ENCODE measurements at regions of chr11 and their contacts with region 1.

Region 1: GRCh38 chr11:119101759-119102423 is at the start of gene DPAGT1:
- DNase-seq: peak; percentile 68 to 90 (median 86)
- ATAC-seq: peak; percentile 90
- H3K4me3 ChIP-seq: peak within 1 kb of the TSS; percentile 79
- H3K4me3 Mint-ChIP-seq: peak within 1 kb of the TSS; percentile 91 to 100 (median 96)
- H3K27ac ChIP-seq: peak within 1 kb of the TSS; percentile 95
- H3K27ac Mint-ChIP-seq: peak within 1 kb of the TSS; percentile 98 to 100 (median 99)
- H3K4me1 ChIP-seq: peaks cover 21 to 26% of the 10 kb centered on the region in 2 donors
- H3K4me1 Mint-ChIP-seq: peaks cover 24 to 64% (median 50%) of the 10 kb centered on the region in 7 donors
- H3K27me3 ChIP-seq: no peaks in the 10 kb centered on the region
- H3K27me3 Mint-ChIP-seq: no peaks in the 10 kb centered on the region
- total RNA-seq, gene DPAGT1: 21.9 to 63.9 (median 37.9) TPM

Region 2: DNA sequence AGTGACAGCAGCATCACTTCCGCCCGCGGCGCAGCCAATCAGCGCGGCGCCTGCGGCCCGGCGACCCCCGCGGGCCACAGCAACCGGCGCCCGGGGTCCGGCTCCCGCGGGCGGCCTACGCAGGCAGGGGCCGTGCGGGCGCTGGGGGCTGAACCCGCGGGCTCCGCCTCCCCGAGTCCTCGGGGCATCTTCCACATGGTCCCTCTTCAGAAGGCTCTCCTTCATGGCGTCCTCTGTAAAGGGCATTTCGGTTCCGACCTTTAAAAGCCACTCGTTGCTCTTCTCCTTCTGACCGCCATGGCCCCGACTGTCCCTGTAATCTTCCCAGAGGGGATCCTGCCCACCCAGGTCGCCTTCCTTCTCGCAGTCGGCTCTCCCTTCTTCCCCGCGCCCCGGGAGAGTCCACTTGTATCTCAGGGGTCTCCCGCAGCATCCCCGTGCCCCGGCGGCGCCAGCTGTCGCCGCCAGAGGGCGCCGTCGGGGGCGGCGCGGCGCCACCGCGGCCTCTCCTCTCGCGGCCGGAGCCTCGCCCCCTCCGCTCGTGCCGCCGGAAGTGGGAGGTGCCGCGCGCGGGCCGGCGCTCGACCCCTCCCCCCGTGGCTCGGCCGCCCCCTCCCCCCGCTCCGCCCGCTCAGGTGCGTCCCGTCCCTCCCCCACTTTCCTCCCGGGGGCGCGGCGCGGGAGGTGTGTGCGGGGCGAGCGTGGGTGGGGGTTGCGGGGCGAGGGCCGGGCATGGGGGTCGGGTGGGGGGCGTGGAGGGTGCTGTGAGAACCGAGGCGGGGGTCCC is 1869.6 kb before region 1 on chr11 and contains the start of gene RNF214:
- CTCF ChIA-PET with region 1: no interaction called
- POLR2A ChIA-PET with region 1: no interaction called
- intact Hi-C with region 1: loop called in 1 of 2 experiments (anchors 5 kb)
- DNase-seq: peak; percentile 61 to 84 (median 73)
- ATAC-seq: peak; percentile 92
- H3K4me3 ChIP-seq: peak within 1 kb of the TSS; percentile 96
- H3K4me3 Mint-ChIP-seq: peak within 1 kb of the TSS; percentile 91 to 100 (median 98)
- H3K27ac ChIP-seq: peak within 1 kb of the TSS; percentile 97
- H3K27ac Mint-ChIP-seq: peak within 1 kb of the TSS; percentile 94 to 100 (median 99)
- H3K4me1 ChIP-seq: peaks cover 32 to 35% of the 10 kb centered on the region in 2 donors
- H3K4me1 Mint-ChIP-seq: peaks cover 40 to 55% (median 50%) of the 10 kb centered on the region in 7 donors
- H3K27me3 ChIP-seq: no peaks in the 10 kb centered on the region
- H3K27me3 Mint-ChIP-seq: no peaks in the 10 kb centered on the region
- total RNA-seq, gene RNF214: 16.6 to 36.0 (median 24.0) TPM

Region 3: GRCh38 chr11:119030329-119031049 is 71.4 kb before region 1 on chr11 and contains the start of gene SLC37A4:
- CTCF ChIA-PET with region 1: no interaction called
- POLR2A ChIA-PET with region 1: interaction called, 3 read pairs
- intact Hi-C with region 1: loop called (anchors 1 to 2 kb)
- DNase-seq: peak; percentile 96 to 100 (median 98)
- ATAC-seq: peak; percentile 97
- H3K4me3 ChIP-seq: peak within 1 kb of the TSS; percentile 91
- H3K4me3 Mint-ChIP-seq: peak within 1 kb of the TSS; percentile 62 to 93 (median 82)
- H3K27ac ChIP-seq: peak within 1 kb of the TSS; percentile 79
- H3K27ac Mint-ChIP-seq: peak within 1 kb of the TSS; percentile 59 to 93 (median 81)
- H3K4me1 ChIP-seq: peaks cover 0 to 10% of the 10 kb centered on the region in 2 donors
- H3K4me1 Mint-ChIP-seq: peaks cover 12 to 24% (median 17%) of the 10 kb centered on the region in 7 donors
- H3K27me3 ChIP-seq: no peaks in the 10 kb centered on the region
- H3K27me3 Mint-ChIP-seq: no peaks in the 10 kb centered on the region
- total RNA-seq, gene SLC37A4: 7.1 to 20.8 (median 14.6) TPM

Region 4: DNA sequence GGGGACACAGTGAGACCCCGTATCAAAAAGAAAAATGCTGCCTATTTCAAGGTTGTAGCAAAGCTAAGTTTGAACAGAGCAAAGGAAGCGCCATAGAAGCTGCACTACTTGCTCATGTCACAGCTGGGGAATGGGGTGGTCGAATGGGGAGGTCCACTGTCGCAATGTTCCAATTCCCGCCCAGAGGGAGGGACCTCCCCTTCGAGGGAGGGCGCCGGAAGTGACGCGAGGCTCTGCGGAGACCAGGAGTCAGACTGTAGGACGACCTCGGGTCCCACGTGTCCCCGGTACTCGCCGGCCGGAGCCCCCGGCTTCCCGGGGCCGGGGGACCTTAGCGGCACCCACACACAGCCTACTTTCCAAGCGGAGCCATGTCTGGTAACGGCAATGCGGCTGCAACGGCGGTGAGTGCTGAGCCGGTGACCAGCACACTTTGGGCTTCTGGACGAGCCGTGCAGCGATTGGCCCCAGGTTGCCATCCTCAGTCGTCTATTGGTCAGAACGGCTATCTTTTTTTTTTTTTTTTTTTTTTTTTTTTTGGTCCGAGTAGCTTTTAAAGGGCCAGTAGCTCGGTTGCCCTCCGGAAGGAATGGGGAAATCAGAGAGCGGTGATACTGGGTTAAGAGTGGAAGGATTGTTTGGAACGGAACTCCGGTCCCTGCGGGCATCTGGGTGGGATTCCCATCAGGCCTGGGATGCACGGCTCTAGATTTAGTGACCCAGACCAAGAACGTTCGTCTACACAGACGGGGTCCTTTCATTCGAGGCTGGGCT is 17.0 kb before region 1 on chr11 and contains the start of gene HMBS:
- CTCF ChIA-PET with region 1: interaction called, 5 read pairs
- POLR2A ChIA-PET with region 1: interaction called, 14 read pairs
- intact Hi-C with region 1: loop called (anchors 1 to 2 kb)
- DNase-seq: peak; percentile 83 to 93 (median 87)
- ATAC-seq: peak; percentile 97
- H3K4me3 ChIP-seq: peak within 1 kb of the TSS; percentile 81
- H3K4me3 Mint-ChIP-seq: peak within 1 kb of the TSS; percentile 85 to 98 (median 94)
- H3K27ac ChIP-seq: peak within 1 kb of the TSS; percentile 81
- H3K27ac Mint-ChIP-seq: peak within 1 kb of the TSS; percentile 87 to 97 (median 93)
- H3K4me1 ChIP-seq: peaks cover 8 to 9% of the 10 kb centered on the region in 2 donors
- H3K4me1 Mint-ChIP-seq: peaks cover 7 to 39% (median 17%) of the 10 kb centered on the region in 7 donors
- H3K27me3 ChIP-seq: no peaks in the 10 kb centered on the region
- H3K27me3 Mint-ChIP-seq: no peaks in the 10 kb centered on the region
- total RNA-seq, gene HMBS: 6.7 to 25.4 (median 7.7) TPM

Region 5: GRCh38 chr11:119144825-119145486 is 43.1 kb after region 1 on chr11:
- CTCF ChIA-PET with region 1: no interaction called
- POLR2A ChIA-PET with region 1: interaction called, 3 read pairs
- intact Hi-C with region 1: loop called in 1 of 2 experiments (anchors 1 kb)
- DNase-seq: no peak
- ATAC-seq: peak; percentile 80
- H3K4me3 ChIP-seq: no peak overlapping the region
- H3K4me3 Mint-ChIP-seq: no peak overlapping the region
- H3K27ac ChIP-seq: no peak overlapping the region
- H3K27ac Mint-ChIP-seq: peak overlapping the region in 1 of 9 donors; percentile 59
- H3K4me1 ChIP-seq: peaks cover 0 to 11% of the 10 kb centered on the region in 2 donors
- H3K4me1 Mint-ChIP-seq: peaks cover 5 to 18% (median 13%) of the 10 kb centered on the region in 7 donors
- H3K27me3 ChIP-seq: no peaks in the 10 kb centered on the region
- H3K27me3 Mint-ChIP-seq: peaks cover 31 to 51% (median 36%) of the 10 kb centered on the region in 5 donors

Region 6: DNA sequence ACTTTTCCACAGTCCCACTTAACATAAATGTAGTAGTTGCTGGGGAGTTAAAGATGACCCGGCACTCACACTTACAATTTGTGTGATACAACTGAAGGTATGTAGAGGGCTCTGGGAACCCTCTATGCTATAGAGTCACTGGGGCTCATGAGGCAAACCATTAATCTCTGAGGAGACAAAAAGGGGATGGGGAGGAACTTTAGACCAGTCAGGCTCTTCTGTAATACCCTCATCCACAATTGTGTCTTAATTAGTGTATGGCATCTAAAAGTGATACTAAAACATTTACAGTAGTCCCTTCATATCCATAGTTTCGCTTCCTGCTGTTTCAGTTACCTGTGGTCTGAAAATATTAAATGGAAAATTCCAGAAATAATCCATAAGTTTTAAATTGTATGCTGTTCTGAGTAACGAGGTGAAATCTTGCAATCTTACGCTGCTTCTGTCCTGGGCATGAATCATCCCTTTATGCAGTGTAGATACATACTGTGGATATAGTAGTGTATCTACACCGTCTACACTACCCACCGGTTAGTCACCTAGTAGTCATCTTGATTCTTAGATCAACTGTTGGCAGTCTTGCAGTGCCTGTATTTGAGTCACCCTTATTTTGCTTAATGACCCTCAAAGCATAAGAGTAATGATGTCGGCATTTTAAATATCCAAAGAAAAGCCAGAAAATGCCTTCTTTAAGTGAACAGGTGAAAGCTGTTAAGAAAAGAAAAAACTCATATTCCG is 116.4 kb after region 1 on chr11:
- CTCF ChIA-PET with region 1: no interaction called
- POLR2A ChIA-PET with region 1: no interaction called
- intact Hi-C with region 1: no loop called
- DNase-seq: no peak
- ATAC-seq: peak; percentile 55
- H3K4me3 ChIP-seq: no peak overlapping the region
- H3K4me3 Mint-ChIP-seq: no peak overlapping the region
- H3K27ac ChIP-seq: no peak overlapping the region
- H3K27ac Mint-ChIP-seq: peak overlapping the region in 7 of 9 donors; percentile 2 to 81 (median 50)
- H3K4me1 ChIP-seq: peaks cover 0 to 10% of the 10 kb centered on the region in 2 donors
- H3K4me1 Mint-ChIP-seq: peaks cover 30 to 77% (median 65%) of the 10 kb centered on the region in 7 donors
- H3K27me3 ChIP-seq: no peaks in the 10 kb centered on the region
- H3K27me3 Mint-ChIP-seq: no peaks in the 10 kb centered on the region

Region 7: DNA sequence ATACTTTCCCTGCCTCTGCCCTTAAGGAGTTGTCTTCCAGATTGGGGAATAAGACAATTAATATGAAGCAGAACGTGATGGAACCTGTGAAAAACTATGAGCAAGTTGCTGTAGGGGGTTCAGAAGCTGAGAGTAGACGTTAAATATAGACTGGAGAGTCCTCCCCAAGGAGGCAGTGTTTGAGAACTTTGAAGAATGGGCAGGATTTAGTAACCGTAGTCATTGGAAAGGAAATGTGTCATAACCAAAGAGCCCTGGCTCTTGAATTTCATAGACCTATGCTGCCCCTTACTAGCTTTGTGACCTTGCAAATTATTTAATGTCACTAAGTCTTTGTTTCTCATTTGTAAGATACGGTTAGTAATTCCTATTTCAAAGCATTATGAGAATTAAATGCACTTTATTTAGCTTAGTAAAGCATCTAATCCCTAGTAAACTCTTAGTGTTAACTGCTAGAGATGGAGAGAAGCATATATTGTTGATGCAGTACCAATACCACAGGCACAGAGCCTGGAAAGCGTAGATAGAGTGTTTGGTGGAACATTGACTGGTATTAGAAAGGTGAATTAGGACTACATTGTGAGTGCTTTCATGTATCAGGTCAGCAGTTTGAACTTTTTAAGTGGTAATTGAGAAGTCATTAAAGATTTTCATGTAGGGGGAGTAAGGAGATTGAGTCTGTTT is 160.9 kb after region 1 on chr11:
- CTCF ChIA-PET with region 1: interaction called, 5 read pairs
- POLR2A ChIA-PET with region 1: interaction called, 3 read pairs
- intact Hi-C with region 1: loop called in 1 of 2 experiments (anchors 5 kb)
- DNase-seq: peak in 1 of 9 donors; percentile 20
- ATAC-seq: peak; percentile 45
- H3K4me3 ChIP-seq: peak overlapping the region; percentile 22
- H3K4me3 Mint-ChIP-seq: no peak overlapping the region
- H3K27ac ChIP-seq: peak overlapping the region; percentile 56
- H3K27ac Mint-ChIP-seq: no peak overlapping the region
- H3K4me1 ChIP-seq: peaks cover 52 to 87% of the 10 kb centered on the region in 2 donors
- H3K4me1 Mint-ChIP-seq: peaks cover 21 to 51% (median 40%) of the 10 kb centered on the region in 7 donors
- H3K27me3 ChIP-seq: no peaks in the 10 kb centered on the region
- H3K27me3 Mint-ChIP-seq: no peaks in the 10 kb centered on the region

Region 8: DNA sequence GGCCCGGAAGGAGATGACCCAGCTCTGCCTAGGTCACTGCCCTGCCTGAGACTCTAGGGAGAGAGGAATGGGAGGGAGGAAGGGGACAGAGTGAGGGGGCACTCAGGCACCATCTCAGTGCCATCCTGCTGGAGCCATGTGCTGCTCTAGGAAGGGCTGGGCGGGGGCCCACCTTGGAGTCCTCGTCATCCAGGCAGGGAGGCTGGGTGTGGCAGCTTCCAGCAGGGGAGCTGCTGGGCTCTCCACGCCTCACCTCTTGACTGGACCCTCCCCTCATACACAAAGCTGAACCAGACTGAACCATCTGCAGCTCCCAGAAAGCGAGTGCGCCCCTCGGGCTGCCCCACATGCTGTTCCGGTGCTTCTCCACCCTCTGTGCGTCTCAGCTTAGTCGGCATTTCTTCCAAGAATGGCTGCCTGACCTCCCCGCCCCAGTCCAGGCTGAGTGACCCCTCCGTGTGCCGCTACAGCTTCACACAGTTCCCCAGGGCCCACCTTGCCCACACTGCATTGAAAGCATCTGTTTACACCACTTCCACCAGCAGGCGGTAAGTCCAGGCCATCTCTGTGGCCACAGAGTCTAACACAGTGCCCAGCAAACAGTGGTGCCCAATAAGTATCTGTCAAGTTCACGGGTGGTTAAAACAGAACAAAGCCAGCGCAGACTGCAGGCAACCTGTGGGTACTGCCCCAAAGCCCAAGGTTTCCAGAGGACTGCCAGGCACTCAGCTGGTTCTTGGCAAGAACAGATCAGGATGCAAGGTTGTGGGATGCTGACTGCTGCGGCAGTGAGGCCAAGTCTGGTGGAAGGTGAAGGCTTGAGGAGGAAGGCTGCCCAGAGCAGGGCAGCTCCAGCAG is 1045.4 kb after region 1 on chr11:
- CTCF ChIA-PET with region 1: no interaction called
- POLR2A ChIA-PET with region 1: no interaction called
- intact Hi-C with region 1: no loop called
- DNase-seq: peak in 1 of 9 donors; percentile 11
- ATAC-seq: no peak
- H3K4me3 ChIP-seq: no peak overlapping the region
- H3K4me3 Mint-ChIP-seq: no peak overlapping the region
- H3K27ac ChIP-seq: no peak overlapping the region
- H3K27ac Mint-ChIP-seq: no peak overlapping the region
- H3K4me1 ChIP-seq: no peaks in the 10 kb centered on the region
- H3K4me1 Mint-ChIP-seq: no peaks in the 10 kb centered on the region
- H3K27me3 ChIP-seq: no peaks in the 10 kb centered on the region
- H3K27me3 Mint-ChIP-seq: peaks cover 37 to 51% (median 43%) of the 10 kb centered on the region in 5 donors